ENCODE measurements at regions of chr4 and their contacts with region 1.

Region 1: DNA sequence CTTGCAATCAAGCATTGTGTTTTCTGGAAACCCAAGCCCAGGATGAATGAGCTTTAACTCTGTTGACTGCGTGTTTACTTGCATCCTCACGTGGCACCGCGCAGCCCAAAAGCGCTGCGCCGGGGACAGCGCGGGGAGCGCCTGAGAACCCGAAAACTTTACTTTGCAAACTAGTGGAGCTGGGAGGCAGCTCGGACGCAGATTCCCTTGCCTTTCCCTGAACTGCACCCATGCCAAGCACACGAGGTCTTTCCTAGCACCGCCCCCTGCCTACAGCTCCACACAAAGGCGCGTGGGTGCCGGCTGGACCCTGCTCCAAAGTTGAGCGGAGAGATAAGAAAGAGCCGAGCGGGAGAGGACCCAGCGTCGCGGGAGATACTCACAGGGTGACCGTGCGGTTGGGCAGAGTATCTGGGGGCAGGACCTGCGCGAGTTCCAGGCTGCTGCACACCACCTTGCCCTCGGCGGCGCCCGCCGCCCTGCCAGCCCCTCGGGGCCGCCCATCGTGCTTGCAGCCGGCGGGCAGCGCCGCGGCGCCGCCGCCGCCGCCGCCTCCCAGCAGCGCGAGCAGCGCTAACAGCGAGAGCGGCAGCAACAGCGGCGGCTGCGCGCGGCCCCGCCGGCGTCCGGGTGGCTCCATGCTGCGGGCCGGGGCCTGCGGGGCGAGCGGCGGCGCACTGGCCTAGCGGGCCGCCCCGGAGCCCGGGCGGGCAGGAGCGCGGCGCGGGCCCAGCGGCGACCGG is 550 bp downstream of the ADGRA3 start:
- DNase-seq: peak; percentile 49 to 62
- H3K4me3 ChIP-seq: peak overlapping the region; percentile 63
- H3K27ac ChIP-seq: peak overlapping the region; percentile 62
- H3K4me1 ChIP-seq: peaks cover 22% of the 10 kb centered on the region
- H3K27me3 ChIP-seq: no peaks in the 10 kb centered on the region
- CTCF ChIP-seq: 0 out of 2 replicates have a peak, but pooled peaks have one; percentile 12

Region 2: DNA sequence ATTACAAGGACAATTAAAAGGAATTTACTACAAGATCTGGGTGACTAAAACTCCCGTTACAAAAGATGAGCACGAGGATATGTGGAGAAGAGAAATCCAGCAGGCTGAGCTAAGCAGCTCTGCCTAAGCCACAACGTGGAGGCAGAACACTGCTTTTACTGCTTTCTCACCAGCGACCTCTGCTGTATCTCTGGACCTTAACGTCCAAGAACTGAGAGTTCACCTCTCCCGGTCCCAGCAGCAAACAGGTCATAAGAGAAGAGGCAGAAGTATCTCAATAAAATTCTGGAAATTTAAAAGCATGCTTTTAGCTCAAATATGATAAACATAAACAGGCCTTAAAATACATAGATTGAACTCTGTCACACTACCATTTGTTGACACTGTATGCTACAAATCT is 80.4 kb before region 1 on chr4:
- CTCF ChIA-PET with region 1: no interaction called
- POLR2A ChIA-PET with region 1: no interaction called
- intact Hi-C with region 1: loop called (anchors 2 kb)
- DNase-seq: peak in 1 of 2 experiments; percentile 4
- H3K4me3 ChIP-seq: no peak overlapping the region
- H3K27ac ChIP-seq: no peak overlapping the region
- H3K4me1 ChIP-seq: no peaks in the 10 kb centered on the region
- H3K27me3 ChIP-seq: no peaks in the 10 kb centered on the region
- CTCF ChIP-seq: no peak

Region 3: DNA sequence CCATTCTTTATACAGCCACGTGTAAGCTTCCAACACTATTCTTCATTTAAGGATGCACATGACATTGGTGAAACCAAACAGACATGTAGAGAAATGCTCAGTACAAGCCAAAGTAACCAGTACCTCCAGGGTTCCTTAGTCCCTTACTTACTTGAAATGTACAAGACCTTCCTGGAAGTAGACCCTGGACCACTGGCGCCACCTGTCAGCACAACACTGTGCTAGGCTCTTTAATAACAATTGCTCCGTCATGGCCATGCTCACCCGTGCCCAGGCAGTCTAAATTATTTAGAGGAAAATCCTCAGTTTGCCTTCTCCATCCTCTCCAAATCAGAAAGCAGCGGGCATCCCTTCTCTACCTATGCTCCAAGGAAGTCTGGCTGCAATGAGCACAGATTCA is 52.1 kb before region 1 on chr4:
- CTCF ChIA-PET with region 1: no interaction called
- POLR2A ChIA-PET with region 1: interaction called, 4 read pairs
- intact Hi-C with region 1: loop called (anchors 5 kb)
- DNase-seq: no peak
- H3K4me3 ChIP-seq: no peak overlapping the region
- H3K27ac ChIP-seq: no peak overlapping the region
- H3K4me1 ChIP-seq: no peaks in the 10 kb centered on the region
- H3K27me3 ChIP-seq: no peaks in the 10 kb centered on the region
- CTCF ChIP-seq: no peak

Region 4: GRCh38 chr4:22500831-22501719 is 14.2 kb before region 1 on chr4:
- CTCF ChIA-PET with region 1: interaction called, 4 read pairs
- POLR2A ChIA-PET with region 1: interaction called, 3 read pairs
- intact Hi-C with region 1: loop called (anchors 1 kb)
- DNase-seq: peak; percentile 42 to 85
- H3K4me3 ChIP-seq: no peak overlapping the region; the same call in 1 of the 2 replicates
- H3K27ac ChIP-seq: no peak overlapping the region
- H3K4me1 ChIP-seq: no peaks in the 10 kb centered on the region; the same call in none of the 2 replicates
- H3K27me3 ChIP-seq: no peaks in the 10 kb centered on the region
- CTCF ChIP-seq: no peak

Region 5: GRCh38 chr4:22531311-22532019 is 16.1 kb after region 1 on chr4:
- CTCF ChIA-PET with region 1: no interaction called
- POLR2A ChIA-PET with region 1: no interaction called
- intact Hi-C with region 1: no loop called
- DNase-seq: no peak
- H3K4me3 ChIP-seq: no peak overlapping the region
- H3K27ac ChIP-seq: no peak overlapping the region
- H3K4me1 ChIP-seq: no peaks in the 10 kb centered on the region
- H3K27me3 ChIP-seq: no peaks in the 10 kb centered on the region
- CTCF ChIP-seq: no peak